ENCODE measurements at regions of chr3 and their contacts with region 1.

Region 1: GRCh38 chr3:119322835-119323722 is 28.9 kb downstream of the ARHGAP31 start:
- DNase-seq: peak; percentile 96
- ATAC-seq: peak; percentile 87
- H3K4me3 Mint-ChIP-seq: peak overlapping the region; percentile 87
- H3K27ac Mint-ChIP-seq: peak overlapping the region; percentile 94
- H3K4me1 Mint-ChIP-seq: peaks cover 59% of the 10 kb centered on the region
- H3K27me3 Mint-ChIP-seq: no peaks in the 10 kb centered on the region
- CTCF ChIP-seq: no peak

Region 2: GRCh38 chr3:119293871-119294695 is 29.0 kb before region 1 on chr3 and contains the start of gene ARHGAP31:
- CTCF ChIA-PET with region 1: interaction called, 4 read pairs
- POLR2A ChIA-PET with region 1: interaction called, 81 read pairs
- intact Hi-C with region 1: loop called (anchors 1 kb)
- DNase-seq: peak; percentile 56
- ATAC-seq: peak; percentile 73
- H3K4me3 Mint-ChIP-seq: peak within 1 kb of the TSS; percentile 88
- H3K27ac Mint-ChIP-seq: peak within 1 kb of the TSS; percentile 90
- H3K4me1 Mint-ChIP-seq: peaks cover 61% of the 10 kb centered on the region
- H3K27me3 Mint-ChIP-seq: no peaks in the 10 kb centered on the region
- CTCF ChIP-seq: no peak
- total RNA-seq, gene ARHGAP31: 23.7 and 26.0 TPM in 2 replicates

Region 3: DNA sequence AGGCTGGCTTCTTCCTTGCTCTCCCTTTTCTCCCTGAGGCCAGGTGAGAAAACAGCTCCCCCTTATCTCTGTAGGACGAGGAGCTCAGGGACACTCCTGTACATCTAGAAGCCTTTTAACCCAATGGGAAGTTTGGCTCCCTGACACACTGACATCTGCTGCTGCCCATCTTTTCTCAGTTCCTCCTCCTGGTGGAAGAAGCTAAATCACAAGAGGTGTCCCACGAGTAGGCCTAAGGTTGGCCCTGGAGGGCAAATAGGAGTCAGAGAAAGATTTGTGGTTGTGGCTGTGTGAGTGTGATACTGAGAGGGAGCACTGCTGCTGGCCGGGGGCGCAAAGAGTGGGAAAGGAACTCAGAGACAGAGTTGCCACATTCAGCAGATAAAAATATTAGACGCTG is 20.6 kb after region 1 on chr3:
- CTCF ChIA-PET with region 1: interaction called, 4 read pairs
- POLR2A ChIA-PET with region 1: interaction called, 6 read pairs
- intact Hi-C with region 1: loop called (anchors 1 kb)
- DNase-seq: no peak
- ATAC-seq: peak; percentile 74
- H3K4me3 Mint-ChIP-seq: no peak overlapping the region
- H3K27ac Mint-ChIP-seq: peak overlapping the region; percentile 6
- H3K4me1 Mint-ChIP-seq: peaks cover 31% of the 10 kb centered on the region
- H3K27me3 Mint-ChIP-seq: no peaks in the 10 kb centered on the region
- CTCF ChIP-seq: no peak

Region 4: GRCh38 chr3:119463171-119464169 is 140.4 kb after region 1 on chr3 and contains the start of gene TMEM39A:
- CTCF ChIA-PET with region 1: no interaction called
- POLR2A ChIA-PET with region 1: interaction called, 12 read pairs
- intact Hi-C with region 1: loop called (anchors 2 kb)
- DNase-seq: peak; percentile 99
- ATAC-seq: peak; percentile 88
- H3K4me3 Mint-ChIP-seq: peak within 1 kb of the TSS; percentile 98
- H3K27ac Mint-ChIP-seq: peak within 1 kb of the TSS; percentile 97
- H3K4me1 Mint-ChIP-seq: peaks cover 34% of the 10 kb centered on the region
- H3K27me3 Mint-ChIP-seq: no peaks in the 10 kb centered on the region
- CTCF ChIP-seq: no peak
- total RNA-seq, gene TMEM39A: 33.7 and 45.6 TPM in 2 replicates

Region 5: DNA sequence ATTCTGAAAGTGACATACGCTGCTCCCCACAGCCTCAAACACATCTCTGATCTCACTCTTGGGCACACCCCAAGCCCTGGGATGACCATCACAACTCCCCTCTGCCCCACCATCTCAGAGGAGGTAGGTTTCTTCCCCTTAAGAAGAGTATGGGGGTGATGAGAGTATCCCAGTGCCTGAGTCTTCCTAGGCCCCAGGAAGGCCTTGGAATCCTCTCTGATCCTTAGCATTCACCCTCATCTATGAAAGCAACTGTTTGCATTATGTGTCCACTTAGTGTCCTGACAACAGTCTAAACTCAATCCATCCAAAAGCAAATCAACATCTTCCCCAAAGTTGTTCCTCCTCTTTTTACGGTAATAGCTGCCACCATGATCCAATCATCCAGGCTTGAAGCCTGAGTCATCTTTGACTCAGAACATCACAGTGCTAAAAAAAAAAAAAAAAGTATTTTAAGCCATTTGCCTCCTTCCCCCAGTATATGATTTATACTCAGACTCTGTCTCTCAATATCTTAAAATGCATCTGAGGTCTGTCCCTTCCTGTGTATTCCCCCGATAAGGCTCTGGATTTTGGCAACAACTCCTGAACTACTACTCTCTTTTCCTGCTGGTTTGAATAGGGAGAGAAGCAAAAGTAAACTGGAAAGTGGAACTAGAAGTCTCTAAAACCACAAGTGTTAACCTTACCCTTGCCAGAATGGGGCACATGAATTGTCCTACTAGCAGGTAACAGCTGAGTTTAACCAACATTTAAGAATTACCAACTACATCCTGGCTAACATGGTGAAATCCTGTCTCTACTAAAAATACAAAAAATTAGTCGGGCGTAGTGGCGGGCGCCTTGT is 314.8 kb after region 1 on chr3:
- CTCF ChIA-PET with region 1: no interaction called
- POLR2A ChIA-PET with region 1: no interaction called
- intact Hi-C with region 1: loop called (anchors 2 kb)
- DNase-seq: no peak
- ATAC-seq: peak; percentile 54
- H3K4me3 Mint-ChIP-seq: peak overlapping the region; percentile 78
- H3K27ac Mint-ChIP-seq: peak overlapping the region; percentile 98
- H3K4me1 Mint-ChIP-seq: peaks cover 44% of the 10 kb centered on the region
- H3K27me3 Mint-ChIP-seq: no peaks in the 10 kb centered on the region
- CTCF ChIP-seq: no peak

Measured in activated B cell treated with CpG ODN at 0.5 μM for 24 hours (primary cell).